Activated T-helper 2 cell treated with anti-CD3 and anti-CD28 coated beads, Interferon-gamma antibody, Interleukin-2, Interleukin-4, amounts not matched to agents 10 μg/mL and 5 μg/mL and 100 μg/mL, durations not matched to agents 14 hours and 24 hours and 36 hours (primary cell): ENCODE measurements at regions of chr18 and their contacts with region 1.

Region 1: GRCh38 chr18:54181856-54182602 is 42.4 kb downstream of the MBD2 start:
- DNase-seq: no peak
- H3K4me3 Mint-ChIP-seq: no peak overlapping the region
- H3K27ac Mint-ChIP-seq: no peak overlapping the region
- H3K4me1 Mint-ChIP-seq: peaks cover 11% of the 10 kb centered on the region
- H3K27me3 Mint-ChIP-seq: no peaks in the 10 kb centered on the region

Region 2: GRCh38 chr18:53534695-53535094 is 647.3 kb before region 1 on chr18:
- intact Hi-C with region 1: no loop called
- DNase-seq: no peak
- H3K4me3 Mint-ChIP-seq: no peak overlapping the region
- H3K27ac Mint-ChIP-seq: no peak overlapping the region
- H3K4me1 Mint-ChIP-seq: no peaks in the 10 kb centered on the region
- H3K27me3 Mint-ChIP-seq: no peaks in the 10 kb centered on the region

Region 3: GRCh38 chr18:54197747-54198411 is 15.8 kb after region 1 on chr18:
- intact Hi-C with region 1: loop called (anchors 1 kb)
- DNase-seq: no peak
- H3K4me3 Mint-ChIP-seq: no peak overlapping the region
- H3K27ac Mint-ChIP-seq: peak overlapping the region; percentile 14
- H3K4me1 Mint-ChIP-seq: peaks cover 10% of the 10 kb centered on the region
- H3K27me3 Mint-ChIP-seq: no peaks in the 10 kb centered on the region

Region 4: DNA sequence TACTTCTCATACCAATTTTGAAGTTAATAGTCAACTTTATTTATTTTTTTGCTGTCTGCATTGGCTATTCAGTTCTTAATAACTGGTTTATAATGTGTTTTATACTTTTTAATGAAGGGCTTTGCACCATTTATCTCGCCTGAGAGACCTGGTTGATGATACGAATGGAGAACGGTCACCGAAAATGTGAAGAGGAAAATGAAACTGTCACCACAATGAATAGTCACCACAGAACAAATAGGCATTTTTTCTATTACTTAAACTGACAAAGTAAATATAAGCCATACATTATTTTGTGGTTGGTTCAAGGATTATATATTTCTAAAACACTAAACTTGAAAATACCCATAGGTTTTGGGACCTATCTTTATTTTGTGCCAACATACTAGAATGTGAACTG is 196.0 kb after region 1 on chr18:
- intact Hi-C with region 1: no loop called
- DNase-seq: no peak
- H3K4me3 Mint-ChIP-seq: no peak overlapping the region
- H3K27ac Mint-ChIP-seq: no peak overlapping the region
- H3K4me1 Mint-ChIP-seq: no peaks in the 10 kb centered on the region
- H3K27me3 Mint-ChIP-seq: no peaks in the 10 kb centered on the region